SK-N-SH (cell line): ENCODE measurements at regions of chr3 and their contacts with region 1.

Region 1: DNA sequence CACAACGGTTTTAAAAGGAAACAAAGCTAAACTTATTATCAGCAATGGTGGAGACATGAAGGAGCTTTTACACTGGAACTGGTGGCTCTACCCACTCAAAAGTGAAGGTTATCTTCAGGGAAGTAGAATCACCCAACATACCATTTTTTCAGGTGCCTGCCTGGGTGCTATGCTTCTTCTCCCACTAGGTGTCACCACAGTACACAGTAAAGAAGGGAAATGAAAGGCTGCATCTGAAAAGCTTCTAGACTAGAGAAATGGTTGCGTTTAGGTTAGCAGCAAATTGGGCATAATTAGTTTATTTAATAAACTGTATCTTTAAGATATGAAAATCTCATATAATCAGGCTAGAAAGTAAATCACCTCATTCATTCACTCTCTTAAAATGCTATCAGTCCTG is 47.0 kb upstream of the SELENOK start:
- DNase-seq: peak; percentile 55
- H3K4me3 ChIP-seq: no peak overlapping the region; a peak in 1 of 4 replicates
- H3K27ac ChIP-seq: no peak overlapping the region; a peak in 1 of 4 replicates
- H3K4me1 ChIP-seq: peaks cover 0 to 8% of the 10 kb centered on the region in 2 experiments; a peak in 2 of 4 replicates
- H3K27me3 ChIP-seq: no peaks in the 10 kb centered on the region
- CTCF ChIP-seq: peak; percentile 88
- EP300 ChIP-seq: no peak
- RAD21 ChIP-seq: peak; percentile 87

Region 2: GRCh38 chr3:53375019-53375418 is 563.6 kb before region 1 on chr3:
- CTCF ChIA-PET with region 1: interaction called, 15 read pairs
- POLR2A ChIA-PET with region 1: no interaction called
- DNase-seq: peak; percentile 82
- H3K4me3 ChIP-seq: peak overlapping the region in 1 of 2 experiments; percentile 29; a peak in 1 of 4 replicates
- H3K27ac ChIP-seq: no peak overlapping the region
- H3K4me1 ChIP-seq: no peaks in the 10 kb centered on the region
- H3K27me3 ChIP-seq: no peaks in the 10 kb centered on the region
- CTCF ChIP-seq: peak; percentile 76
- EP300 ChIP-seq: no peak
- RAD21 ChIP-seq: peak; percentile 99

Region 3: GRCh38 chr3:53753518-53754183 is 185.0 kb before region 1 on chr3:
- CTCF ChIA-PET with region 1: no interaction called
- POLR2A ChIA-PET with region 1: no interaction called
- DNase-seq: no peak
- H3K4me3 ChIP-seq: no peak overlapping the region
- H3K27ac ChIP-seq: no peak overlapping the region
- H3K4me1 ChIP-seq: peaks cover 0 to 5% of the 10 kb centered on the region in 2 experiments; a peak in 1 of 4 replicates
- H3K27me3 ChIP-seq: no peaks in the 10 kb centered on the region
- CTCF ChIP-seq: no peak
- EP300 ChIP-seq: no peak
- RAD21 ChIP-seq: no peak

Region 4: GRCh38 chr3:53956586-53956985 is 17.9 kb after region 1 on chr3:
- CTCF ChIA-PET with region 1: interaction called, 19 read pairs
- POLR2A ChIA-PET with region 1: no interaction called
- DNase-seq: no peak
- H3K4me3 ChIP-seq: no peak overlapping the region
- H3K27ac ChIP-seq: no peak overlapping the region
- H3K4me1 ChIP-seq: no peaks in the 10 kb centered on the region
- H3K27me3 ChIP-seq: no peaks in the 10 kb centered on the region; the same call in 1 of the 2 replicates
- CTCF ChIP-seq: no peak
- EP300 ChIP-seq: no peak
- RAD21 ChIP-seq: no peak

Region 5: DNA sequence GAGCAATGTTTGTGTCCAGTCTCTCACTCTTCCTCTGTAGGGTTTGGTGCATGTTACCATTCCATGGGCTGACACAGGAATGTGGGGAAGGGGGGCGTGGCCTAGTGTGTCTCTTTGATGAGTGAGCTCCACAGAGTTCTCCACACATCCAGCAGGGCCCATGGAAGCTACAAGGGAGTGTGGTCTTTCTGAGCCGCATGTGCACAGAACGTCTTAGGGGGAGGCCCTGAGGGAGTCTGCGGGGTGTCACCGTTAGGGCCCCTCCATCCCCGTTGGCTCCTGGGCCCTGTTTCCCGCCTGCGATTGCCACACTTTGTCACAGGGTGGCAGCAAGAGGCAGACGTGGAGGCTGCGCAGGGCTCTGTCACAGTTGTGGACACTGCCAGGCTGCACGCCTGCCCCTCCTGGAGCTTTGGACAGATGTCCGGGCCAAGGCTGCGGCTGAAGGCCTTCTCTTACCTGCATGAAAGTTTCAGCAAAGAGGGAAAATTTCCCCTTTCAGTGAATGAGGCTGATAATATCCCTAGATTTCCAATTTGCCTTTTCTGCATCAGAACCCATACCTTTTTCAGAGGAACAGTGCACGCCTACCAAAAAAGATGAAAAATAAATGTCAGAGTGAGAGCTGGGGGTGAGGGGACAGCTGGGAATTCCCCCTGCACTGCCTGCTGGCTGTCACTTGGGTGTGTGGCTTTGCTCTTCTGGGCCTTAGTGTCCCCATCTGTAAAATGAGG is 208.0 kb after region 1 on chr3:
- CTCF ChIA-PET with region 1: interaction called, 54 read pairs
- POLR2A ChIA-PET with region 1: no interaction called
- DNase-seq: peak; percentile 82
- H3K4me3 ChIP-seq: peak overlapping the region in 1 of 2 experiments; percentile 29; a peak in 2 of 4 replicates
- H3K27ac ChIP-seq: no peak overlapping the region
- H3K4me1 ChIP-seq: peaks cover 0 to 2% of the 10 kb centered on the region in 2 experiments; a peak in 1 of 4 replicates
- H3K27me3 ChIP-seq: no peaks in the 10 kb centered on the region
- CTCF ChIP-seq: no peak
- EP300 ChIP-seq: no peak
- RAD21 ChIP-seq: peak; percentile 86

Region 6: GRCh38 chr3:54294214-54294613 is 355.6 kb after region 1 on chr3:
- CTCF ChIA-PET with region 1: interaction called, 14 read pairs
- POLR2A ChIA-PET with region 1: no interaction called
- DNase-seq: no peak
- H3K4me3 ChIP-seq: no peak overlapping the region
- H3K27ac ChIP-seq: no peak overlapping the region
- H3K4me1 ChIP-seq: no peaks in the 10 kb centered on the region
- H3K27me3 ChIP-seq: no peaks in the 10 kb centered on the region
- CTCF ChIP-seq: no peak
- EP300 ChIP-seq: no peak
- RAD21 ChIP-seq: no peak

Region 7: GRCh38 chr3:54374214-54374855 is 435.7 kb after region 1 on chr3:
- CTCF ChIA-PET with region 1: interaction called, 23 read pairs
- POLR2A ChIA-PET with region 1: no interaction called
- DNase-seq: peak; percentile 23
- H3K4me3 ChIP-seq: no peak overlapping the region
- H3K27ac ChIP-seq: no peak overlapping the region
- H3K4me1 ChIP-seq: no peaks in the 10 kb centered on the region; a peak in 1 of 4 replicates
- H3K27me3 ChIP-seq: no peaks in the 10 kb centered on the region
- CTCF ChIP-seq: no peak
- EP300 ChIP-seq: no peak
- RAD21 ChIP-seq: peak; percentile 55

Region 8: GRCh38 chr3:54427941-54428871 is 489.6 kb after region 1 on chr3:
- CTCF ChIA-PET with region 1: interaction called, 38 read pairs
- POLR2A ChIA-PET with region 1: no interaction called
- DNase-seq: peak; percentile 53
- H3K4me3 ChIP-seq: no peak overlapping the region; a peak in 1 of 4 replicates
- H3K27ac ChIP-seq: no peak overlapping the region
- H3K4me1 ChIP-seq: no peaks in the 10 kb centered on the region
- H3K27me3 ChIP-seq: no peaks in the 10 kb centered on the region
- CTCF ChIP-seq: peak; percentile 85
- EP300 ChIP-seq: no peak
- RAD21 ChIP-seq: peak; percentile 93